Ascending aorta (tissue), 2 donors: ENCODE measurements at regions of chr12 and their contacts with region 1.

Region 1: DNA sequence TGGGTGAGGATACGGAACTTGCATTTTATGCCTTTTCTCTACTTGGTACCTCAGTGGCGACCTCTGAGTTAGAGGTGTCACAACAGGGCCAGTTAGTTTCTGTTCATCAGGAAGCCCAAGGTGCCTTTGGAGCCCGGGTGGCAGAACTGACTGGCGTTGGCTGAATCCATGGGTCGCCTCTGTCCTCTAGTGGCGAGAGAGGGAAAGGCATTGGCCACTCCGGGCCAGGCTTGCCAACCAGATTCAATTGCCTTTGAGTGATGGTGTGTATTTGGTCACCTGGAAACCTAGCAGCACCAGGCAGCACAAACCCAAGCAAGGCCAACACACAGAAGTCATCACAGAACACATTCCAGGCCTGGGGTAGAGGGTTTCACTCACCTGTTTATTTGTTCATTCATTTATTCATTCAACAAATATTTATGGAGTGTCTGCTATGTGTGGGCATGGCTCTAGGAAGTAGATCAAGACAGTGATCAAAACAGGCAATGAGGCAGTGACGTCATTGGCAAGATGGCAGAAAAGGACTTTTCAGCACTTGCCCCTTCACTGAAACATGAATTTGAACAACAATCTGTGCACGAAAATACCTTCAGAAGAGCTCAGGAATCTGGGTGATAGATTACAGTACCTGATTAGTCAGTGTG is 40.5 kb upstream of the KCNA5 start:
- DNase-seq: peak in 1 of 2 donors; percentile 82
- H3K4me3 ChIP-seq: no peak overlapping the region
- H3K27ac ChIP-seq: no peak overlapping the region
- H3K4me1 ChIP-seq: peaks cover 0 to 7% of the 10 kb centered on the region in 2 donors
- H3K27me3 ChIP-seq: no peaks in the 10 kb centered on the region
- CTCF ChIP-seq: peak; percentile 96 to 98 (median 98)

Region 2: DNA sequence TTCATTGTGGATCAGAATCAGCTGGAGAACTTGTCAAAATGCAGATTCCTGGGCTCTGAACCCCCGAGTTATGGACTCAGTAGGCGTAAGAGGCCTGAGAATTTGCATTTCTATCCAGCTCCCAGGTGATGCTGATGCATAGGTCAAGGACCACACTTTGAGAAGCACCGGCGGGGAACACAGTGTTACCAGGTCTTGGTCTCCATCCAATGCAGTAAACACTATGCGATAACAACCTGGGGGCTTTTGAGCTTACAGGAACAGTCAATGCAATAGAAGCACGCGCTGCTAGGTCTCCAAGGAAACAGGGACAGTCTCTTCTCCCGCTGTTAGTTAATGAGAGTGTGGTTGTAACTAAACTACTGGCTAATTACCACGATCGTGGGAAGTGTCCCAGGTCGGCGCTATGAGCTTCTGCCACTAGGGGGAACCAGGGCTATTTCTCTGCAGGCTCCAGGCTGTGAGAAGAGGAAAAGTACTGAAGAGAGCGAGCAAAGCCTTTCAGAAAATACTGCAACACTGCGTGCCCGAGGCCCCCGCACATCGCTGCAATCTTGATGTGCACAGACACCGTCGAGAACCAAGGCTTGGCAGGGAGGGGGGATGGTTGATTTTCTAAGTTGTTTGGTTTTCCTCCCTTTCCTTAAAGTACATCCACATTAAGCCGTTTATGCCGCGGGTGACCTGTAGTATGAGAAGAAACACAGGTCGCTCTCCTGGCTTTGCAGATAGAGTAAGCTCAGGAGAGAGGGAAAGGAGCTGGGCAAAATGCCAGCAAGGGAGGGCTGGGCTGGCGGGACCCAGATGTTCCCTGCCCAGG is 145.5 kb before region 1 on chr12:
- intact Hi-C with region 1: loop called (anchors 1 kb)
- DNase-seq: peak in 1 of 2 donors; percentile 83
- H3K4me3 ChIP-seq: peak overlapping the region; percentile 41 to 42
- H3K27ac ChIP-seq: no peak overlapping the region
- H3K4me1 ChIP-seq: peaks cover 3 to 10% of the 10 kb centered on the region in 2 donors
- H3K27me3 ChIP-seq: no peaks in the 10 kb centered on the region
- CTCF ChIP-seq: peak; percentile 56 to 88 (median 79)

Region 3: GRCh38 chr12:4899364-4899763 is 103.8 kb before region 1 on chr12:
- intact Hi-C with region 1: loop called (anchors 1 kb)
- DNase-seq: no peak
- H3K4me3 ChIP-seq: no peak overlapping the region
- H3K27ac ChIP-seq: no peak overlapping the region
- H3K4me1 ChIP-seq: no peaks in the 10 kb centered on the region
- H3K27me3 ChIP-seq: no peaks in the 10 kb centered on the region
- CTCF ChIP-seq: peak in 1 of 3 experiments; percentile 14